Colonic mucosa (tissue), 4 donors: ENCODE measurements at regions of chr3 and their contacts with region 1.

Region 1: GRCh38 chr3:27134165-27134796 is 234.9 kb downstream of the NEK10 start:
- DNase-seq: peak; percentile 74
- H3K4me3 ChIP-seq: no peak overlapping the region
- H3K27ac ChIP-seq: no peak overlapping the region
- H3K4me1 ChIP-seq: no peaks in the 10 kb centered on the region
- H3K27me3 ChIP-seq: no peaks in the 10 kb centered on the region
- CTCF ChIP-seq: peak; percentile 84

Region 2: GRCh38 chr3:27253831-27254230 is 119.5 kb after region 1 on chr3:
- intact Hi-C with region 1: loop called (anchors 2 kb)
- DNase-seq: peak; percentile 66
- H3K4me3 ChIP-seq: no peak overlapping the region
- H3K27ac ChIP-seq: no peak overlapping the region
- H3K4me1 ChIP-seq: no peaks in the 10 kb centered on the region
- H3K27me3 ChIP-seq: no peaks in the 10 kb centered on the region
- CTCF ChIP-seq: peak; percentile 53

Region 3: GRCh38 chr3:27368831-27369607 is 234.7 kb after region 1 on chr3 and contains the start of gene NEK10:
- intact Hi-C with region 1: no loop called
- DNase-seq: peak; percentile 93
- H3K4me3 ChIP-seq: peak within 1 kb of the TSS; percentile 96
- H3K27ac ChIP-seq: no peak within 1 kb of the TSS
- H3K4me1 ChIP-seq: peaks cover 4% of the 10 kb centered on the region
- H3K27me3 ChIP-seq: no peaks in the 10 kb centered on the region
- CTCF ChIP-seq: no peak
- total RNA-seq, gene NEK10: 0.67 to 0.88 TPM